HEK293T (cell line): ENCODE measurements at regions of chr4 and their contacts with region 1.

Region 1: DNA sequence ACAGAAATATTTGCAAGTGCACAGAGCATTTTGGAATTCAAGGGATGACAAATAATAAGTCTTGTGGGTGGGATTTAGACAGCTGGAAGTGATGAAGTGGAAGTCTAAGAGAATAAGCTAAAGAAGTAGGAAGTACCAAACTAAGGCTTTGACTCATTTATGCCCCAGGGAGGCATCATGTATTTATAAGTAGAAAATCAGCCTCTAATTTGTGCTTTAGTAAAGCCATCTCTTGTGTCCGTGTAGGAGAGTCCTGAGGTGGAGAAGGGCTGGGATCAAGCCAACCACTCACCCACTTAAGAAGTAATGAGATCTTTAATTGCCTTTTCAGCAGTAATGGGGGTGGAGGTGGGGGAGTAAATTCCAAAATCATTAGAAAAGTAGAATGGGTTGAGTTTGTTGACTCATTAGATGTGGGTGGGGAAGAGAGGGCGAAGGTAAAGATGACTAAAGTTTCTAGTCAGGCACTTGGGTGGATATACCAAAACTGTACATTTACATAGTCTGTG is 356.7 kb downstream of the STIM2 start:
- DNase-seq: no peak

Region 2: DNA sequence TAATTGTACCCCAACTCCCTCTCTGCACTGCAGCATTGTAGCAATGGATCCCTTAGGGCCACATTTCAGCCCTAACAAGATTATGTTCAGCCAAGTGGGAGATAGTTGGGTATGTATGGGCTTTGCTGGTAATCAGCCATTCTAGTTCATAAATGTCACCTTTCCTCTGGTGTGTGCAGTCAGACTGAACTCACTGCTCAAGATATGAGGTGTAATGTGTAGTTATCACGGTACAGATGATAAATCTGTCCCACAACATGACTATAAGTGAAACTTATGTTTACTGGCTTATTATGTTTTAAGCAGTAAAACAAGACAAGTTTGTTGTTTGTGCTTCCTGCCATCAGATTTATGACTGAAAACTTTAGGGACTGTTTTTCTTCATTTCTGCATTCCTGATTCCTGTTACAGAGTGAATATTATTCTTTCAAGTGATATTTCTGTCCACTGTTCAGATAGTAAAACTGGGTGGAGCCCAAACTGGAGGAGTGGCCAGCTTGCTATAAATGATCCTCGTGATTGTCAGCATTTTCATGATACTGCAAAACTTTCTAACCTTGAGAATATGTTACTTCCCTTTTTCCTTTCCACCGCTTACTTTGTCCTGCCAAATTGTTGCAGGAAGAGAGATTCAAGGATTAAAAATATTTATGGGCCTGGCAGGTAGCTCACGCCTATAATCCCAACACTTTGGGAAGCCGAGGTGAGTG is 1795.3 kb before region 1 on chr4:
- CTCF ChIA-PET with region 1: interaction called, 10 read pairs
- POLR2A ChIA-PET with region 1: no interaction called
- DNase-seq: no peak